ENCODE measurements at regions of chr20 and their contacts with region 1.

Region 1: GRCh38 chr20:2451939-2452732 is 18.5 kb downstream of the SNRPB start:
- DNase-seq: peak; percentile 63 to 70 (median 67)
- ATAC-seq: peak in 3 of 4 donors; percentile 65 to 82 (median 78)
- H3K4me3 ChIP-seq: no peak overlapping the region
- H3K27ac ChIP-seq: no peak overlapping the region
- H3K4me1 ChIP-seq: peaks cover 0 to 5% (median 0%) of the 10 kb centered on the region in 12 donors
- H3K27me3 ChIP-seq: no peaks in the 10 kb centered on the region
- CTCF ChIP-seq: peak; percentile 70 to 92 (median 80)
- POLR2A ChIP-seq: no peak

Region 2: GRCh38 chr20:2206957-2207769 is 245.0 kb before region 1 on chr20:
- intact Hi-C with region 1: loop called (anchors 2 to 5 kb)
- DNase-seq: peak; percentile 59 to 87 (median 74)
- ATAC-seq: peak; percentile 52 to 88 (median 83)
- H3K4me3 ChIP-seq: peak overlapping the region; percentile 9 to 65 (median 56)
- H3K27ac ChIP-seq: no peak overlapping the region
- H3K4me1 ChIP-seq: peaks cover 0 to 29% (median 9%) of the 10 kb centered on the region in 12 donors
- H3K27me3 ChIP-seq: peaks cover 0 to 44% (median 19%) of the 10 kb centered on the region in 9 donors
- CTCF ChIP-seq: peak; percentile 59 to 87 (median 73)
- POLR2A ChIP-seq: no peak

Region 3: DNA sequence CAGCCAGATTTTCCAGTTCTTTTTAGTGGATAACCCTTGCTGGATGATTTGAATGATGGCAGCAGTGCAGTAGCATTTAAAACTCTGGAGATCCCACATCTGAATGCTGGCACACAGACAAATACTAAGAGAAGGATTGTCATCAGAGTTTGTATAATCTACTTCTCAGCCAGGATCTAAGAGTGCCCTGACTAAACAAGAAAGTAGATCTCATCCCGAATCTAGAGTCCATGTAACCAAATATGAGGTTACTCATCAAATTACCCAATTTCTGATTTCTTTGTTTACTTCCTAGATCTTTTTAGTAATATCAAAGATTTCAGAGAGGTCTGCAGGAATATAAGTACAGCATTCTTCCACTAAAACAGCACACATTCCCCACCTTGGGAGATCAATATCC is 92.1 kb after region 1 on chr20:
- intact Hi-C with region 1: no loop called
- DNase-seq: no peak
- ATAC-seq: no peak
- H3K4me3 ChIP-seq: no peak overlapping the region
- H3K27ac ChIP-seq: no peak overlapping the region
- H3K4me1 ChIP-seq: no peaks in the 10 kb centered on the region
- H3K27me3 ChIP-seq: peaks cover 0 to 36% (median 0%) of the 10 kb centered on the region in 9 donors
- CTCF ChIP-seq: no peak
- POLR2A ChIP-seq: no peak

Region 4: DNA sequence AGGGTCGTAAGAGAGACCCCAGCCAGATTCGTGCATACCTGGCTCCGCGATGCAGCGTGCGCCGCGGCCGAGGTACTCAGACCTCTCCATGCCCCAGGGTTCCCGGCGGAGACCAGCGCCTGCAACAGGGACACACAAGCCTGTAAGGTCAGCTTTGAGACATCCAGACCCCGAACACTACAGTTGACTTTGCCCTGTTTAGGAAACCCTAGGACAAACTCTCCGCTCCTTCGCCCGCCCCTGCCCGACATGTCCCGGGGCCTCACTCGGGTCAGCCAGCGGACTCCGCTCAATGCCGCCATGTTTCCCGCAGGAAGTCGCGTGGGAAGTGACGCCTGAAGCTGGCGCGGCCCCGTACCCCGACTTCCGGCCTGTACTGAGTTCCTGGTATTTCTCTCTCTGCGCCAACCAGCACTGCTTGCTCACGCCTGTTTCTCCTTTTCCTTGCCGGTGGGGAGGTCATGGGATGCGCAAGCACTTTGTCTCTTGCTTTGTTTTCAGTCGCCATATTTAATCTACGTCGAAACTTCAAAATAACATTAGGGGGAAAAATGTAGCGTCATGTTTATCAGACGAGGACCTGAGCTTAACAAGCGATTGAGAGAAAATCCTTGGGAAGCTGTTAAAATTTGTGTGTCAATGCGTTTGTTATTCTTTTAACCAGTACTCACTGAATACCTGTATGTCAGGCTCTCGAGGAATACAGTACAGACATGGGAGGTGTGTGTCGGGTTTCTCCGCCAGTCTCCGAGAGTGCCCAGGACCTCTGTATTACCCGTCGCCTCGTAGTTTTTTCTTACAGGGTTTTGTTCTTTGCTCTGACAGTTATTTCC is 212.0 kb after region 1 on chr20 and contains the start of gene IDH3B:
- intact Hi-C with region 1: no loop called
- DNase-seq: peak; percentile 93 to 95 (median 93)
- ATAC-seq: peak; percentile 95 to 99 (median 98)
- H3K4me3 ChIP-seq: peak within 1 kb of the TSS; percentile 71 to 97 (median 88)
- H3K27ac ChIP-seq: peak within 1 kb of the TSS; percentile 79 to 96 (median 90)
- H3K4me1 ChIP-seq: peaks cover 0 to 17% (median 13%) of the 10 kb centered on the region in 12 donors
- H3K27me3 ChIP-seq: no peaks in the 10 kb centered on the region
- CTCF ChIP-seq: no peak
- POLR2A ChIP-seq: peak in 1 of 2 donors; percentile 80
- total RNA-seq, gene IDH3B: 122 to 356 (median 208) TPM